Endothelial cell of umbilical vein (primary cell): ENCODE measurements at regions of chr17 and their contacts with region 1.

Region 1: DNA sequence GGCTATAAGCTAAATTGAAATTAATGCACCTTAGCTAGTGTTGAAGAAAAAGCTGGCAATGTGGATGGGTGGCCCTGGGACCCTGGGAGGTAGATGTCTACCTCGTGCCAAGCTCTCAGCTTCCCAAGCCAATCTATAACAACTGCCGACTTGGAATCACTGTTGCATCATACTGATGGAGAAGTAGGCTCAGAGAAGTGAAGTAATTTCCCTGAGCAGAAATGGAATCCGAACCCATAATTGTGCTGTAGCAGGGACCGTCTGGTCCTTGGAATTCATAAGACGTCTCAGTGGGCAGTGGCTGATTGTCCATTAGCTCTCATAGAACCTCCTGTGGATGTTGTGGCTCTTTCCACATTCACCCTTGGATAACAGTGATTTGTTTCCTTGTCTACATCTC is 196.6 kb downstream of the RAB11FIP4 start:
- DNase-seq: no peak
- H3K4me3 ChIP-seq: no peak overlapping the region
- H3K27ac ChIP-seq: no peak overlapping the region
- H3K4me1 ChIP-seq: peaks cover 15% of the 10 kb centered on the region
- H3K27me3 ChIP-seq: no peaks in the 10 kb centered on the region
- CTCF ChIP-seq: no peak
- POLR2A ChIP-seq: no peak

Region 2: DNA sequence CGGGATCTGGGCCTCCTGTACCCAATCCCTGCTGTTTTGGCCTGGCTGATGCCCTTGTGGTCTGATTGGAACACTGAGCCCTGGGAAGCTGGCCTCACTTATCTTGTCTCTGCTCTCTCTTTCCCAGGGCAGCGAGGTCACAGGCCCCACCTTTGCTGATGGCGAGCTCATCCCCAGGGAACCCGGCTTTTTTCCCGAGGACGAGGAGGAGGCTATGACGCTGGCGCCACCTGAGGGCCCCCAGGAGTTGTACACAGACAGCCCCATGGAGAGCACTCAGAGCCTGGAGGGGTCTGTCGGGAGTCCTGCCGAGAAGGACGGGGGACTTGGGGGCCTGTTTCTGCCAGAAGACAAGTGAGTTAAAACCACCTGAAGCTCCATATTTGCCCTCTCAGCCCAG is 70.5 kb before region 1 on chr17:
- CTCF ChIA-PET with region 1: no interaction called
- POLR2A ChIA-PET with region 1: no interaction called
- dilution Hi-C with region 1: no loop called
- intact Hi-C with region 1: no loop called
- DNase-seq: no peak
- H3K4me3 ChIP-seq: no peak overlapping the region
- H3K27ac ChIP-seq: no peak overlapping the region
- H3K4me1 ChIP-seq: no peaks in the 10 kb centered on the region
- H3K27me3 ChIP-seq: no peaks in the 10 kb centered on the region
- CTCF ChIP-seq: peak in 1 of 2 donors; percentile 33
- POLR2A ChIP-seq: no peak

Region 3: GRCh38 chr17:31609996-31610910 is 22.2 kb after region 1 on chr17:
- CTCF ChIA-PET with region 1: no interaction called
- POLR2A ChIA-PET with region 1: no interaction called
- dilution Hi-C with region 1: no loop called
- intact Hi-C with region 1: loop called (anchors 1 kb)
- DNase-seq: no peak
- H3K4me3 ChIP-seq: no peak overlapping the region
- H3K27ac ChIP-seq: no peak overlapping the region
- H3K4me1 ChIP-seq: no peaks in the 10 kb centered on the region
- H3K27me3 ChIP-seq: no peaks in the 10 kb centered on the region
- CTCF ChIP-seq: no peak
- POLR2A ChIP-seq: no peak